ENCODE measurements at regions of chr19 and their contacts with region 1.

Region 1: DNA sequence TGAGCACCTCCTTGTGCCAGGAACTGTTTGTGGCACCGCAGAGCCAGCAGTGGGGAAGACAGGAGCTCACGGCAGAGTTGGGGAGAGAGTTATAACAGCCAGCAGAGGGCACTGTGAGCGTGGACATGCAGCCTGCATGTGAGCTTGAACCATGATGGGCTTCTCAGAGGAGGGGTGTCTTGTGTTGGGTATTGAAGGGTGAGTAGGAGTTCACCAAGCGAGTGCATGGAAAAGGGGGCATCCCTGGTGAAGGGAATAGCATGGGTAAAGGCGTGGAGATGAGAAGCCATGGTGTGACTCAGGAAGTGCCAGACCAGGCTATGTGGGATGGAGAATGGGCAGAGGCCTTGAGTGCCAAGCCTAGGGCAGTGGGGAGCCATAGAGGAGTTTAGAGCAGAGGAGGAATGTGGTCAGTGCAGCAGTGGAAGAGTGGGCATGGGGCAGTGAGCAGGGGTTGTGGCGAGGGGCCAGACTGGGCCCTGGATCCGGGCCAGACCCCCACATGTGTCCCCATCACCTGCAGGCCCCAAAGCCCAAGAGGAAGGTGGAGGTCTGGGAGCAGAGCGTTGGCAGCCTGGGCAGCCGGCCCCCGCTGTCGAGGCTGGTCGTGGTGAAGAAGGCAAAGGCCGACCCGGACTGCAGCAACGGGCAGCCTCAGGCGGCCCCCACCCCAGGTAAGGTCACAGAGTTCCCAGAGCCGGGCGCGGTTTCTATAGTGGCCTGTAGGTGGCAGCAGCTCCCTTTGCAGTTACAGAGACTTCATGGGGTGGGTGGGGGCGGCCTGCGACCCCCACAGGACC is 11.8 kb upstream of the SHD start:
- DNase-seq: peak; percentile 29
- H3K4me3 ChIP-seq: no peak overlapping the region
- H3K27ac ChIP-seq: peak overlapping the region in 1 of 2 donors; percentile 58
- H3K4me1 ChIP-seq: no peaks in the 10 kb centered on the region
- H3K27me3 ChIP-seq: no peaks in the 10 kb centered on the region
- CTCF ChIP-seq: peak; percentile 71 to 75 (median 74)
- POLR2A ChIP-seq: no peak

Region 2: GRCh38 chr19:4352701-4353121 is 85.4 kb after region 1 on chr19:
- intact Hi-C with region 1: loop called (anchors 5 kb)
- DNase-seq: no peak
- H3K4me3 ChIP-seq: no peak overlapping the region
- H3K27ac ChIP-seq: no peak overlapping the region
- H3K4me1 ChIP-seq: no peaks in the 10 kb centered on the region
- H3K27me3 ChIP-seq: no peaks in the 10 kb centered on the region
- CTCF ChIP-seq: peak; percentile 65 to 85 (median 71)
- POLR2A ChIP-seq: no peak

Region 3: DNA sequence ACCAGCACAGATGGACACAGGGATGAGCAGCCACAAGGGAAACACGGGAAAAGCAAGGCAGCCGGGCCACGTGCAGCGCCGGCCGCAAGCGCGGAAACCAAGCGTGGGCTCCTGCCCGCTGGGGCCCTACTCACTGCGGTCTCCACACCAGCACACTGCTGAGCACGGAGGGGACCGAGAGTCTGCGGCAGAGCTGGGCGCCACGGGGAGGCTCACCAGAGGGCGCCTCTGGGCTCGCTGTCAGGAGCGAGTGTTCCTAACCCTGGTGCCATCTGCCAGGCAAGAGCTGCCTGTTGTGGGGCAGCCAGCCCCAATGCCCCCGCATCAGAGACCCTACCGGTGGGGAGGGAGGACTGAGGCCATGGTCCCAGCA is 102.6 kb after region 1 on chr19:
- intact Hi-C with region 1: no loop called
- DNase-seq: no peak
- H3K4me3 ChIP-seq: no peak overlapping the region
- H3K27ac ChIP-seq: peak overlapping the region; percentile 78 to 82
- H3K4me1 ChIP-seq: peaks cover 40% of the 10 kb centered on the region
- H3K27me3 ChIP-seq: no peaks in the 10 kb centered on the region
- CTCF ChIP-seq: peak; percentile 16 to 72 (median 32)
- POLR2A ChIP-seq: no peak

Region 4: DNA sequence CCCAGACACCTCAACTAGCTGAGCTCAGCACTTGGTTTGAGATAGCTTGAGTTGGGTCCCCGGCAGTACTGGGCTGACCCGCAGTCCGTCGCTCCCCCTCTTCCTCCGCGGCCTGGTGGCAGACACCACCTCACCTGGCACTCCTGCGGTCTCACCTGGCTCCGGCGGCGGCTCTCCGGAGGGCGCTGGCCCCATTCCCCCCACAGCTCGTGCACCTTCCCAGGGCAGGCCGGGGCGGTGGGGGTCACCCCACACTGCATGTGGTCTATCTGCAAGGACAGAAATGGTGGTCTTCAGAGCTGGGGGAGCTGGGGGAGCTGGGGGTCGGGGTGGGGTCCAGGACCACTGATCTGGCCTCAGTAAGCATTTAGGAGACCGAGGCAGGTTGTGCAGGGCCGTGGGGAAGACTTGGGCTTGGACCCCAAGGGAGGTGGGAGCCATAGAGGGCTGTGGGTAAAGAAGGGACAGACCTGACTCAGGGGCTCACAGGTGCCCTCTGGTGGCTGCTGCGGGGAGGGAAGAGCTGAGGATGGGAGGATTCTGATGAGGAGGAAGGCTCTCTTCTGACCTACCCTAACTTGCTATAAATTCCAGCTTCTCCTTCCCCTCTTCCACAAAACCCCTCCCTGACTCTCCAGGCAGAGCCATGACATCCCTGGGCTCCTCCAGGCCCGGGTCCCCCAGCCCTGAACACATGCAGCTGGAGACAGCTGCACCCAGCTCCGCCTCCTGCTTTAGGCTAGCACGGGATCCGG is 257.7 kb after region 1 on chr19:
- intact Hi-C with region 1: loop called (anchors 10 kb)
- DNase-seq: no peak
- H3K4me3 ChIP-seq: no peak overlapping the region
- H3K27ac ChIP-seq: no peak overlapping the region
- H3K4me1 ChIP-seq: no peaks in the 10 kb centered on the region
- H3K27me3 ChIP-seq: no peaks in the 10 kb centered on the region
- CTCF ChIP-seq: peak; percentile 19 to 55 (median 46)
- POLR2A ChIP-seq: no peak